ENCODE measurements at regions of chr6 and their contacts with region 1.

Region 1: GRCh38 chr6:40550202-40551101 is 36.7 kb downstream of the LRFN2 start:
- H3K4me3 Mint-ChIP-seq: no peak overlapping the region
- H3K27ac Mint-ChIP-seq: no peak overlapping the region
- H3K4me1 Mint-ChIP-seq: no peaks in the 10 kb centered on the region
- H3K27me3 Mint-ChIP-seq: peaks cover 4% of the 10 kb centered on the region

Region 2: DNA sequence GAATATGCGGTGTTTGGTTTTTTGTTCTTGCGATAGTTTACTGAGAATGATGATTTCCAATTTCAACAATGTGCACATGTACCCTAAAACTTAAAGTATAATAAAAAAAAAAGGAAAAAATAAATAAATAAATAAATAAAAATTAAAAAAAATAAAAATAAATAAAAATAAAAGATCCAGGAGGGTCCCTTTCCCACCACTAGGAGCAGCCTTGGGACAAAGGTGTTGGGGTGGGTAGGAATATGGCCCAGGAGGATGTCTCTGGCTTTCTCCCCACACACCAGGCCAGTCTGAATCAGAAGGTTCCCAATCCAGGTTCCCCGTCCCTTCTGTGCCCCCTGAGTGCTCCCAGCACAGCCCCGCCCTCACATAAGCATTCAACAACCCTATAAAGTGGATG is 27.2 kb after region 1 on chr6:
- intact Hi-C with region 1: no loop called
- H3K4me3 Mint-ChIP-seq: no peak overlapping the region
- H3K27ac Mint-ChIP-seq: no peak overlapping the region
- H3K4me1 Mint-ChIP-seq: no peaks in the 10 kb centered on the region
- H3K27me3 Mint-ChIP-seq: no peaks in the 10 kb centered on the region

Region 3: DNA sequence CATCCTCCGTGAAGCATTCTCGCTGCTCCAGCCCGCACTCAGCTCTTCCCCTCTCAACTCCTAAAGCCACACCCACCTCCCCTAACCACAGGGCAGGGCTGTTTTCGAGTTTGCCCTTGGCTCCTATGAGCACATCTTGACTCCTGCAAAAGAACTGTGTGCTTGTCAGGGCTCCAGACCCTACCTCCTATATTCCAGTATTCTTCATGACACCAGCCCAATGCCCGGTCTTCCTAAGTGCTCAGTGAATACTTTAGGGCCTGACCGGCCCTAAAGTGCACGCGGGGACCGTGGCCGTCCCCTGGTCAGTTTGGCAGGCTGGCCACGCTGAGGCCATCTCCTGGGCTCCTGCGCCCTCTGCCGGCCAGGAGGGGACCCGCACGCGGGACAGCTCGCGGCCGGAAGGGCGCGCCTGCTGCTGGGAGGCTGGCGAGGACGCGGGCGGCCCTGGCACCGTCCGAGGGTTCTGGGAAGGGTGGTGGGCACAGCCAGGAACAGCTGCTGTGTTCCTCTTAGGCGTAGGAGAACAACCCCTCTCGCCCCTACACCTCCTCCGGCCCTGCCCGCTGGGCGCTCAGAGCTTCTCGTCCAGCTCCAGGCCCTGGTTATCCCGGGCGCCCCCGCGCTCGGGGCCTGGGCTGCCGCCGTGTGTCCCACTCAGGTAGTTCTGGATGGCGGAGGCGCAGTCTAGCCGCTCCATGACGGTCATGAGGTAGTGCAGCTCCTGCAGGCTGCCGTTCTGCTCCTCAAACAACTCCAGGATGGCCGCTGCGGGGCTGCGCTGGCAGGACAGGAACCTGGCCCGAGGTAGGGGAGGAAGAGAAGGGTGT is 477.6 kb after region 1 on chr6:
- intact Hi-C with region 1: loop called (anchors 5 kb)
- H3K4me3 Mint-ChIP-seq: peak overlapping the region; percentile 71
- H3K27ac Mint-ChIP-seq: peak overlapping the region; percentile 62
- H3K4me1 Mint-ChIP-seq: peaks cover 42% of the 10 kb centered on the region
- H3K27me3 Mint-ChIP-seq: peaks cover 5% of the 10 kb centered on the region